Activated CD4-positive, alpha-beta memory T cell treated with anti-CD3 and anti-CD28 coated beads for 36 hours (primary cell): ENCODE measurements at regions of chr12 and their contacts with region 1.

Region 1: DNA sequence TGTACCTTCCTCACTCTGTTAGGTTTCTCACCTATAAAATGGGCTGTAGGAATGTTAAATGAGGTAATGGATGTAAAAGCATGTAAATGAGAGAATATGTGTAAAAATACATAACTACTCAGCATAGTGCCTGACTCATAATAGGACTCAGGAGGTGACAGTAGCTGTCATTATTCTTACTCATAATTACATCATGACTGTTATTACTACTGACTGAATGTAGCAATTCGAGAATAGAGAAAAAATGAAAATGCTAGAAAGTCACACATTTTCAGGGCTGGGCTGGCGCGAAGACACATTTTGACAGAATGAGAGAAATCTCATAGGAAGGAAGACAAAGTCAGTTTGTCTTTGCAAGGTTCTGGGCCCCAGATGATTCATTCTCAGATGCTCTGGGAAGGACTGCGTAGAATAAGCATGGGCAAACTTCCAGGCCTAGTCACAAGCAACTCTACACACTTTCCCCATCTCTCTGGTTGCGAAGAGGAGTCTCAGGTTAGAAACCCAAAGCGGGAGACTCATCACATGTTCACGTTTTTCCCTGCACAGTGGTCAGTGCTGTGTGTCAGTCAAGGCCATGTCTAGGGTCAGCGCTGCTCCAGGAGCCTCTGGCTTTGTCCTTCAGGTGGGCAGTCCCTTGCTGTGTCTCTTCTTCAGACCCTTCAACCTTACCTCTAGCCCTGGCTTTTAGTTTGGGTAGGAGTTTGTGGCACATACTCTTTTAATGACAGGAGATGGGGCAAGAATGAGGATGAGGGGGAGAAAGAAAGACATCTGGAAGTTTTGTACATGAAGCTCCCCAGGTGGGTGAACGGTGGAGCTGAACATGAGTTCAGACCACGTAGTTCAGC is 8.4 kb downstream of the GPRC5A start:
- DNase-seq: peak; percentile 86
- H3K4me3 Mint-ChIP-seq: no peak overlapping the region
- H3K27ac Mint-ChIP-seq: peak overlapping the region; percentile 77
- H3K4me1 Mint-ChIP-seq: peaks cover 19% of the 10 kb centered on the region
- H3K27me3 Mint-ChIP-seq: peaks cover 16% of the 10 kb centered on the region

Region 2: GRCh38 chr12:12349711-12350665 is 549.8 kb before region 1 on chr12 and contains the start of gene MANSC1:
- CTCF ChIA-PET with region 1: no interaction called
- POLR2A ChIA-PET with region 1: no interaction called
- intact Hi-C with region 1: no loop called
- DNase-seq: peak; percentile 72
- H3K4me3 Mint-ChIP-seq: peak within 1 kb of the TSS; percentile 62
- H3K27ac Mint-ChIP-seq: peak within 1 kb of the TSS; percentile 16
- H3K4me1 Mint-ChIP-seq: peaks cover 17% of the 10 kb centered on the region
- H3K27me3 Mint-ChIP-seq: no peaks in the 10 kb centered on the region
- total RNA-seq, gene MANSC1: 1.9 to 2.2 TPM

Region 3: GRCh38 chr12:12803186-12803585 is 96.6 kb before region 1 on chr12:
- CTCF ChIA-PET with region 1: interaction called, 3 read pairs
- POLR2A ChIA-PET with region 1: no interaction called
- intact Hi-C with region 1: loop called (anchors 1 kb)
- DNase-seq: peak; percentile 61
- H3K4me3 Mint-ChIP-seq: no peak overlapping the region
- H3K27ac Mint-ChIP-seq: peak overlapping the region; percentile 50
- H3K4me1 Mint-ChIP-seq: peaks cover 46% of the 10 kb centered on the region
- H3K27me3 Mint-ChIP-seq: no peaks in the 10 kb centered on the region

Region 4: GRCh38 chr12:12975322-12976077 is 75.7 kb after region 1 on chr12:
- CTCF ChIA-PET with region 1: no interaction called
- POLR2A ChIA-PET with region 1: no interaction called
- intact Hi-C with region 1: no loop called
- DNase-seq: peak; percentile 24
- H3K4me3 Mint-ChIP-seq: no peak overlapping the region
- H3K27ac Mint-ChIP-seq: no peak overlapping the region
- H3K4me1 Mint-ChIP-seq: no peaks in the 10 kb centered on the region
- H3K27me3 Mint-ChIP-seq: no peaks in the 10 kb centered on the region

Region 5: DNA sequence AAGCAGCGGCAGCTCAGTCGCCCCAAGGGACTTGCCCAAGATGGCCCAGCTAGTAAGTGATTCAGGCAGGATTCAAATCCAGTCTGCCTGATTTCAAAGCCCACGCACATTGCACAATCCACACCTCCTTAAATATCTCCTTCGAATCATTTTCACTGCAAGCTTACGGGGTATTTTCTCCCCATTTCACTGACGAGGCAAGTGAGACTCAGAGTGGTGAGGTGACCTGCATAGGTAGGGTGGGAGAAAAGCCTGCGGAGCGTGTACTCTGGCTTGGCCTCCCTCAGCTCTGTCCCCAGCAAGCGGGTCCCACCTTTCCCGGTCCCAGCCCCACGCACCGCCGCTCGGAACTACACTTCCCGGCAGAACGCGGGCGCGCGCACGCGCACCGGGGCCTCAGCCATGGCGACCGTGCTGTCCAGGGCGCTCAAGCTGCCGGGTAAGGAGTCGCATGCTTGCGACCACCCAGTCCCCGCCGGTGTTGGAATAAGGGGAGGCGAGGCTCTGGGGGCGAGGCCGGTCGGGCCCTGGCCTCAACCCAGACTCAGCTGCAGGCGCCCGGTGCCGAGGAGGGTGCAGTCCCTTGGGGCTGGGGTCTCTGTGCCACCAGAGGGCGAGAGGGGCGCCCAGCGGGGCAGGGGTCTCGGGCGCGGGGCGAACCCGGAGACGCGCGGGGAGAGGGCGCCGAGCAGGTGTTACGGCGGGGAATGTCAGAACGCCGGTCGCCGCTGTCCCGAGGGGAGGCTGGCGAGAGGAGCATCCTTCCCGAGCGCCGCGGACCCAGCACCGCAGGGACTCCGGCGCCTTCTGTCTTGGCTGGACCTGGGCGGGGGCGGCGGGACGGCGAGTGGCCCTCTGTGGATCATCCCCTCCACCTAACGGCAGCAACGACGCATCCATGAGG is 144.5 kb after region 1 on chr12 and contains the start of gene FAM234B:
- CTCF ChIA-PET with region 1: no interaction called
- POLR2A ChIA-PET with region 1: no interaction called
- intact Hi-C with region 1: loop called (anchors 1 kb)
- DNase-seq: peak; percentile 78
- H3K4me3 Mint-ChIP-seq: peak within 1 kb of the TSS; percentile 80
- H3K27ac Mint-ChIP-seq: no peak within 1 kb of the TSS
- H3K4me1 Mint-ChIP-seq: peaks cover 25% of the 10 kb centered on the region
- H3K27me3 Mint-ChIP-seq: peaks cover 3% of the 10 kb centered on the region
- total RNA-seq, gene FAM234B: 6.8 TPM